Activated B cell treated with CpG ODN at 0.5 μM for 24 hours (primary cell): ENCODE measurements at regions of chr22 and their contacts with region 1.

Region 1: DNA sequence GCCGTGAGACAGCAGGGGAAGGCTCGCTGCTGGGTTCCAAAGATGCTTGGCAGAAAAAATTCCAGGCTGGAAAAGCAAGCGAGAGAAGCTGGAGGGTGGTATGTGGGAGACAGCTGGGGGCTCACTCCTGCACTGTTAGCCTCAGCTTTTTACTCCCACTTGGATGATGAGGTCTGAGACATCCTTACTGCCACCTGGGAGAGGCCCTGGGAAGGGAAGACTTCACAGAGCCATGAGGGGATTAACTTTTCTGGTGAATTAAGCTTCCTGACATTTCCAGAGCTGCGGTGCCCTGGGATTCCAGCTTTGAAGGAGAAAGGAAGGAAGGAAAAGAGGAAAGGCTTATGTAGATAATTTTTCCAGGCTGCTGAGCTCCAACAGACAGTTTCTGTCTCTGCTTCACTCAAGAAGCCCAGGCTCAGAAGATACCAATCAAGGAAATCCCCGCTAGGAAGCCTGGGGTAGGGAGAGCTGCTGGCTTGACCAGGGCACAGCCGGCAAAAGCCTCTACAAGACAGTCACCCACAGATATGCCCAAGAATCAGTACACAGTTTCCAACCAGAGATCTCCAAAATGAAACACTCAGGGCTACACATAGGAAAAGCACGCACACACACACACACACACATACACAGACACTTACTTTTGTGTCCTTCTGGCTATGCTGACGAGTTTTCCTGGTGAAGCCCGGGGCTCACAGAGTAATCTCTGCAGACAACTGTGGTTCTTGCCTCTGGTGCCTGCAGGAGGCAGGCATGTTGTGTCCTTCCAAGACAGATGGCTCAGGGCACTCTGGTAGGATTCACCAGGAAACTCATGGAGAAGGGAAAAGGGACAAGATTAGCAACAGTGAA is 907 bp downstream of the MCHR1 start:
- DNase-seq: no peak
- ATAC-seq: no peak
- H3K4me3 Mint-ChIP-seq: no peak overlapping the region
- H3K27ac Mint-ChIP-seq: no peak overlapping the region
- H3K4me1 Mint-ChIP-seq: peaks cover 10% of the 10 kb centered on the region
- H3K27me3 Mint-ChIP-seq: peaks cover 22% of the 10 kb centered on the region
- CTCF ChIP-seq: no peak

Region 2: GRCh38 chr22:40385036-40385782 is 295.0 kb before region 1 on chr22:
- CTCF ChIA-PET with region 1: no interaction called
- POLR2A ChIA-PET with region 1: no interaction called
- intact Hi-C with region 1: no loop called
- DNase-seq: no peak
- ATAC-seq: peak; percentile 96
- H3K4me3 Mint-ChIP-seq: peak overlapping the region; percentile 82
- H3K27ac Mint-ChIP-seq: peak overlapping the region; percentile 95
- H3K4me1 Mint-ChIP-seq: peaks cover 68% of the 10 kb centered on the region
- H3K27me3 Mint-ChIP-seq: no peaks in the 10 kb centered on the region
- CTCF ChIP-seq: no peak

Region 3: DNA sequence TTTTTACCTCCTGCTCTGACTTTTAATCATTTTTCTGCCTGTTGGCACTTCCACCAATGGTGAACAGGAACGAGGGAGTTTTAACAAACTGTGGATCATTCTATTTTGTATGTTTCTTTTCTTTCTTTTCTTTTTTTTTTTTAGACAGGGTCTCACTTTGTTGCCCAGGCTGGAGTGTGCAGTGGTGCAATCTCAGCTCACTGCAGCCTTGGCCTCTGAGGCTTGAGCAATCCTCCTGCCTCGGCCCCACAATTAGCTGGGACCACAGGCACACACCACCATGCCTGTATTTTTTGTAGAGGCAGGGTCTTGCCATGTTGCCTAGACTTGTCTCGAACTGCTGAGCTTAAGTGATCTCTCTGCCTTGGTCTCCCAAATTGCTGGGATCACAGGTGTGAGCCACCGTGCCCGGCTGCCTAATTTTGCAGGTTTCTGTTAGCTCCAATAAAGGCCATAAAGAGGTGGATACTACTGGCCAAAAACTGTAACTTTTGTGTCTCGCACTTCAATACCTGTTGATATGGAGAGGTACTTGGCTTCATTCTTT is 79.2 kb after region 1 on chr22:
- CTCF ChIA-PET with region 1: interaction called, 23 read pairs
- POLR2A ChIA-PET with region 1: interaction called, 5 read pairs
- intact Hi-C with region 1: loop called (anchors 1 kb)
- DNase-seq: no peak
- ATAC-seq: no peak
- H3K4me3 Mint-ChIP-seq: no peak overlapping the region
- H3K27ac Mint-ChIP-seq: no peak overlapping the region
- H3K4me1 Mint-ChIP-seq: peaks cover 26% of the 10 kb centered on the region
- H3K27me3 Mint-ChIP-seq: no peaks in the 10 kb centered on the region
- CTCF ChIP-seq: no peak

Region 4: DNA sequence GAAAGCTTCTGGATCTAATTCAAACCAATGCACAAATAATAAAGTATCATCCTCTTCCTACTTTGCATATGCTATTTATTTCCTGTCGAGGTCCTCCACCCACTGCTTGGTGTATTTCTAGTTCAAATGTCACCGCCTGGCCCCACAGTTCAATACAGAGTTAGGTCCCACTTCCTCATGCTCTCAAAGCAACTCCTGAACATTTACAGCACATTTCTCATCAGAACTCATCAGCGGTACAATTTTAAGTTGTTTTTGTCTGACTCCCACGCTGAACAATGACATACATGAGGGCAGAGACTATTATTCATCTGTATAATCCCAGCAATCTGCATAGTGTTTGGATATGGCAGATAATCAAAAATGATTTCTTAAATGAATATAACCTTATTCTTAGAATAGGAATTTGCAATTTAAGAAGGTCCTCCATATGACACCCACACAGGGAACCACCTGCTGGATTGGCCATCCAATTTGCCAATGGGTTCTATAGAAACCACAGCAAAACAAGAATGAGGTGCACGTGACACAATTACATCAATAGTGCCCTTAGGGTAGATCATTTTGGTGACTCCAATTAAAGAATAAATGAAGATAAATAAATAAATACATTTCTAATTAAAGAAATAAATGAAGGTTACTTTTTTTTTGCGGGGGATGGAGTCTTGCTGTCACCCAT is 84.7 kb after region 1 on chr22:
- CTCF ChIA-PET with region 1: interaction called, 23 read pairs
- POLR2A ChIA-PET with region 1: interaction called, 5 read pairs
- intact Hi-C with region 1: loop called (anchors 1 kb)
- DNase-seq: no peak
- ATAC-seq: peak; percentile 89
- H3K4me3 Mint-ChIP-seq: peak overlapping the region; percentile 69
- H3K27ac Mint-ChIP-seq: peak overlapping the region; percentile 95
- H3K4me1 Mint-ChIP-seq: peaks cover 46% of the 10 kb centered on the region
- H3K27me3 Mint-ChIP-seq: no peaks in the 10 kb centered on the region
- CTCF ChIP-seq: no peak

Region 5: GRCh38 chr22:40818747-40819598 is 138.8 kb after region 1 on chr22 and contains the start of gene SLC25A17:
- CTCF ChIA-PET with region 1: interaction called, 6 read pairs
- POLR2A ChIA-PET with region 1: interaction called, 14 read pairs
- intact Hi-C with region 1: loop called (anchors 1 kb)
- DNase-seq: peak; percentile 78
- ATAC-seq: peak; percentile 93
- H3K4me3 Mint-ChIP-seq: peak within 1 kb of the TSS; percentile 98
- H3K27ac Mint-ChIP-seq: peak within 1 kb of the TSS; percentile 92
- H3K4me1 Mint-ChIP-seq: peaks cover 36% of the 10 kb centered on the region
- H3K27me3 Mint-ChIP-seq: no peaks in the 10 kb centered on the region
- CTCF ChIP-seq: no peak
- total RNA-seq, gene SLC25A17: 14.8 and 19.3 TPM in 2 replicates

Region 6: GRCh38 chr22:40856513-40857308 is 176.5 kb after region 1 on chr22 and contains the starts of genes ST13 and XPNPEP3:
- CTCF ChIA-PET with region 1: interaction called, 13 read pairs
- POLR2A ChIA-PET with region 1: interaction called, 7 read pairs
- intact Hi-C with region 1: loop called (anchors 1 kb)
- DNase-seq: peak; percentile 96
- ATAC-seq: peak; percentile 90
- H3K4me3 Mint-ChIP-seq: peak within 1 kb of the TSS; percentile 98
- H3K27ac Mint-ChIP-seq: peak within 1 kb of the TSS; percentile 100
- H3K4me1 Mint-ChIP-seq: peaks cover 47% of the 10 kb centered on the region
- H3K27me3 Mint-ChIP-seq: no peaks in the 10 kb centered on the region
- CTCF ChIP-seq: no peak
- total RNA-seq, gene ST13: 183 and 221 TPM in 2 replicates
- total RNA-seq, gene XPNPEP3: 20.3 and 20.8 TPM in 2 replicates

Region 7: GRCh38 chr22:40898850-40899357 is 218.7 kb after region 1 on chr22:
- CTCF ChIA-PET with region 1: interaction called, 21 read pairs
- POLR2A ChIA-PET with region 1: interaction called, 6 read pairs
- intact Hi-C with region 1: loop called (anchors 1 kb)
- DNase-seq: no peak
- ATAC-seq: peak; percentile 71
- H3K4me3 Mint-ChIP-seq: no peak overlapping the region
- H3K27ac Mint-ChIP-seq: peak overlapping the region; percentile 21
- H3K4me1 Mint-ChIP-seq: peaks cover 3% of the 10 kb centered on the region
- H3K27me3 Mint-ChIP-seq: no peaks in the 10 kb centered on the region
- CTCF ChIP-seq: no peak